CD8-positive, alpha-beta T cell (primary cell): ENCODE measurements at regions of chr1 and their contacts with region 1.

Region 1: DNA sequence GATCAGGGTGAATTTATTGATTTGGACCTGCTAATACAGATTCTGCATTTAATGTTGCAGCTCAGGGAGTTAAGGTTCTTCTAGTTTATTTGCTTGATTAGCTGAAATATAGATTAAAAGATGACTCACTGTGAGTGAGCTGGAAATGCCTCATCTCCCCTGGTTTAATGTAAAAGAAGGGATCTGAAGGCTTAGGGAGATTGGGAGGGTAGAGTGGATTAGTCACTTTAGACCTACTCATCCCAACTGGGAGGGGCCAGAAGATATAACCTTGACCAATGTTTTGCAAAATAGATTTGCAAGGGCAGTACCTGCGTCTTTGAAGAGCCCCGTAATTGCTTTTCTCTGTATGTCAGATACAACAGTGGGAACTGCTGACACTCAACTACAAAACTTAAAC is 922.8 kb upstream of the ADGRL4 start:
- DNase-seq: no peak
- ATAC-seq: no peak
- H3K4me3 ChIP-seq: no peak overlapping the region
- H3K4me3 Mint-ChIP-seq: no peak overlapping the region
- H3K27ac ChIP-seq: no peak overlapping the region
- H3K27ac Mint-ChIP-seq: no peak overlapping the region
- H3K4me1 ChIP-seq: no peaks in the 10 kb centered on the region
- H3K4me1 Mint-ChIP-seq: no peaks in the 10 kb centered on the region
- H3K27me3 ChIP-seq: no peaks in the 10 kb centered on the region
- H3K27me3 Mint-ChIP-seq: no peaks in the 10 kb centered on the region
- CTCF ChIP-seq: no peak

Region 2: GRCh38 chr1:79887059-79887458 is 42.3 kb before region 1 on chr1:
- CTCF ChIA-PET with region 1: no interaction called
- POLR2A ChIA-PET with region 1: no interaction called
- intact Hi-C with region 1: loop called in 1 of 2 experiments (anchors 5 kb)
- DNase-seq: no peak
- ATAC-seq: no peak
- H3K4me3 ChIP-seq: no peak overlapping the region
- H3K4me3 Mint-ChIP-seq: no peak overlapping the region
- H3K27ac ChIP-seq: no peak overlapping the region
- H3K27ac Mint-ChIP-seq: no peak overlapping the region
- H3K4me1 ChIP-seq: no peaks in the 10 kb centered on the region
- H3K4me1 Mint-ChIP-seq: no peaks in the 10 kb centered on the region
- H3K27me3 ChIP-seq: no peaks in the 10 kb centered on the region
- H3K27me3 Mint-ChIP-seq: no peaks in the 10 kb centered on the region
- CTCF ChIP-seq: no peak

Region 3: DNA sequence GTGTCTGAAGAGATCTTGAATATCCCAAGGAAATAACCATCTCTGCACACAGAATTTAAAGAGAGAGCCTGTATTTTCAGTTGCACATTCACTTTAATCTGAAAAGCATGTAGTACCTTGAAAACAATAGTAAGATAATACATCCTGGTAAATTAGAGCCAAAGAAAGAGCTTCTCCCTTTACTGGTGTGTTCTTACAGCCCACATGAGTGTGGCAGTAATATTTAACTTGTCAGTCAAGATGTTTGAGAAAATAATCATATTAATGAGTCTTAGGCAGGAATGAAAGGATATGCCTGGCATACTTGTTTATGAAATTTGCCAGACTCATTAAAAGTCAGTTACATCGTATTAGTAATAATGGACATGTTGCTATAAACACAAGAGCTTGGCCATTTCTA is 14.5 kb before region 1 on chr1:
- CTCF ChIA-PET with region 1: no interaction called
- POLR2A ChIA-PET with region 1: no interaction called
- intact Hi-C with region 1: loop called in 1 of 2 experiments (anchors 1 kb)
- DNase-seq: no peak
- ATAC-seq: no peak
- H3K4me3 ChIP-seq: no peak overlapping the region
- H3K4me3 Mint-ChIP-seq: no peak overlapping the region
- H3K27ac ChIP-seq: no peak overlapping the region
- H3K27ac Mint-ChIP-seq: no peak overlapping the region
- H3K4me1 ChIP-seq: no peaks in the 10 kb centered on the region
- H3K4me1 Mint-ChIP-seq: no peaks in the 10 kb centered on the region
- H3K27me3 ChIP-seq: no peaks in the 10 kb centered on the region
- H3K27me3 Mint-ChIP-seq: no peaks in the 10 kb centered on the region
- CTCF ChIP-seq: no peak

Region 4: DNA sequence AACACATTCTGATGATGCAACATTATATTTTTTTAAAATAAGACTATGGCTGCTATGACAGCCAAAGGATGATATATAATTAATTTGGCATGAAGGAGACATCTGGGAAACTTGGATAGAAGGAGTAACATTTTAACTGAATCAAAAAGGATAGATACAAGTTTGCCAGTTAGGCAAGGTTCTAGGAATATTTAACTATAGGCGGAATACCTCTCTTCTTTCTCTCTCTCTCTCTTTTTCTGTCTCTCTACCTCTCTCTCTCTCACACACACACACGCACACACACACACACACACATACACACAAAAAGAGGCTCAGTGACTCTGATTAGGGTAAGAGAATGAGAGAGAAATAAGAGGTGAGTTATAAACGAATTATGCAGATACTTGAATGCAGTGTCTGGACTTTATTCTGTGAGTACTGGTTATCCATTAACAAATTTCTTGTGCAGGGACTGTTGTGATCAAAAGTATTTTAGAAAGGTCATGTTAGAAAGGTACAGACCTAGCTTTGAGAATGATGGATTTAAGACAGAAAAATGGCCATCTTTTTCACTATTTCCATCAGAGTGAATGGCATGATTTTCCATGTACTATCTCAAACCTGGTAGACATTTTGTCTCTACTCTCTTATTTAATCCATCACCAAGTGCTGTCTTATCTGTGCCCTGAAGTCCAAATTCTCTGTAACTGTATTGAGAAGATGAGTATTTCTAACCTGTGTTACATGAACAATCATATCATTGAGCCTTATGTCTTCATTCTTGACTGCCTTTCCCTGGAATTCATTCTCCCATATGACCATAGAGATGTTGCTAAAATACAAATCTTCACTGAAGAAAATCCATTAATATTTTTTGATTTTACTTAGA is 184.0 kb after region 1 on chr1:
- CTCF ChIA-PET with region 1: no interaction called
- POLR2A ChIA-PET with region 1: no interaction called
- intact Hi-C with region 1: no loop called
- DNase-seq: no peak
- ATAC-seq: no peak
- H3K4me3 ChIP-seq: no peak overlapping the region
- H3K4me3 Mint-ChIP-seq: no peak overlapping the region
- H3K27ac ChIP-seq: no peak overlapping the region
- H3K27ac Mint-ChIP-seq: no peak overlapping the region
- H3K4me1 ChIP-seq: no peaks in the 10 kb centered on the region
- H3K4me1 Mint-ChIP-seq: no peaks in the 10 kb centered on the region
- H3K27me3 ChIP-seq: no peaks in the 10 kb centered on the region
- H3K27me3 Mint-ChIP-seq: no peaks in the 10 kb centered on the region
- CTCF ChIP-seq: no peak